GM10248 (cell line): ENCODE measurements at regions of chr20 and their contacts with region 1.

Region 1: GRCh38 chr20:6583134-6583738 is 184.2 kb upstream of the BMP2 start:
- DNase-seq: peak; percentile 46
- CTCF ChIP-seq: peak; percentile 44

Region 2: GRCh38 chr20:6595704-6596103 is 12.5 kb after region 1 on chr20:
- CTCF ChIA-PET with region 1: interaction called, 25 read pairs
- POLR2A ChIA-PET with region 1: no interaction called
- DNase-seq: no peak
- CTCF ChIP-seq: no peak